Activated CD8-positive, alpha-beta T cell treated with anti-CD3 and anti-CD28 coated beads, Interleukin-2, amount 10 ng/mL, durations not matched to agents 7 days and 5 days (primary cell): ENCODE measurements at regions of chr20 and their contacts with region 1.

Region 1: GRCh38 chr20:23937303-23938117 is 51.1 kb downstream of the GGTLC1 start:
- DNase-seq: peak; percentile 73
- ATAC-seq: peak; percentile 85
- H3K4me3 Mint-ChIP-seq: no peak overlapping the region
- H3K27ac Mint-ChIP-seq: no peak overlapping the region
- H3K4me1 Mint-ChIP-seq: no peaks in the 10 kb centered on the region
- H3K27me3 Mint-ChIP-seq: peaks cover 4% of the 10 kb centered on the region

Region 2: DNA sequence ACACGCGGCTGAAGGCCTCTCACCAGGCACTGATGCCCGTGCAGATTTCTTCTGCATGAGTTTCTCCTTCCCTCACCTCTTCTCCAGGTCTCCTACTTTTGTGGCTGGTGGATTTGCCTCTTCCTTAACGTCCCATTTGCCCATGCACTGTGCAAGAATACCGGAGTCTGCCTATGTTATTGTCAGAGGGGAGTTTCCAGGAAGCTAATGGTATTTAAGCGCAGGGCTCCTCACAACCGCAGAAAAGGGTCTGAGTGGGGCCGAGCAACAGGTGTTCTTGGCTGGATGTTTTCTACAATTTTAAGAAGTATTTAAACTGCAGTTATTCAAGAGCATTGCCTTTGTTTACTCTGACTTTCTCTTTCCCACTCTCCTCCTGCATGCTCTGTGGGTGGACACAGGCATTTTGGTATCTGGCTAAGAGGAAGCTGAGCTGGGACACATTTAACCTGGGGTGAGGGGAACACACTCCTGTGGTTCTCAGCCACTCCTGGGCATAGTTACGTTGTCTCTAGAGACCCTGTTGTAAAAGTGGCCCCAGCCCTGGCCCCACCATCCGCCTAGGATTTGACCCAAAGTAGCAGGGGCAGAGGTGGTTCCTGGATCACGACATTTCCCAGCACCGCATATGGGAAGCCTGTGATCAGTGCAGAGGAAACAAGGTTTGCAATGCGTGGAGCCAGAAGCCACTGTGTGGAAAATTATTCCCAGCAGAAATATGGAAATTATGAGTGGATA is 16.7 kb after region 1 on chr20:
- CTCF ChIA-PET with region 1: interaction called, 12 read pairs
- POLR2A ChIA-PET with region 1: no interaction called
- DNase-seq: no peak
- ATAC-seq: no peak
- H3K4me3 Mint-ChIP-seq: no peak overlapping the region
- H3K27ac Mint-ChIP-seq: no peak overlapping the region
- H3K4me1 Mint-ChIP-seq: no peaks in the 10 kb centered on the region
- H3K27me3 Mint-ChIP-seq: peaks cover 8% of the 10 kb centered on the region